Endothelial cell of umbilical vein (primary cell): ENCODE measurements at regions of chr1 and their contacts with region 1.

Region 1: GRCh38 chr1:23184212-23184934 is 15.7 kb upstream of the LUZP1 start:
- DNase-seq: peak; percentile 60
- H3K4me3 ChIP-seq: peak overlapping the region in 1 of 3 experiments; percentile 19
- H3K27ac ChIP-seq: no peak overlapping the region
- H3K4me1 ChIP-seq: peaks cover 10% of the 10 kb centered on the region
- H3K27me3 ChIP-seq: no peaks in the 10 kb centered on the region
- CTCF ChIP-seq: peak; percentile 43 to 48
- POLR2A ChIP-seq: no peak

Region 2: DNA sequence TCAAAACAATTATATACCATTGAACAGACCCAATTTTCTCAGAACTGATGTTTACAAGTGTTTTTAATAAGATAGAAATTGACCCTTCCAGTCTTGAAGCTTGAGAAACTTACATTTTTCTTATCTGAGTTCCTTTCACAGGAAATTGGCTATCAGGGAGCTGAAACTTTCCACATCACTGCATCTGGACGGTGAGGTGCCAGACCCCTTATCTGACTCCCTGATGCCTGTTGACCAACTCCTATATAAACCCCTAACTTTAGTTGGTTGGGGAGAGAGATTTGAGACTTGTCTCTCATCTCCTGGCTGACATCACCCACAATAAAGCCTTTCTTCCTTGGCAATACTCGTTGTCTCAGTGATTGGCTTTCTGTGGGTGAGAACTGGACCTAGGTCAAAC is 243.1 kb before region 1 on chr1:
- CTCF ChIA-PET with region 1: no interaction called
- POLR2A ChIA-PET with region 1: no interaction called
- dilution Hi-C with region 1: no loop called
- intact Hi-C with region 1: no loop called
- DNase-seq: no peak
- H3K4me3 ChIP-seq: no peak overlapping the region
- H3K27ac ChIP-seq: no peak overlapping the region
- H3K4me1 ChIP-seq: no peaks in the 10 kb centered on the region
- H3K27me3 ChIP-seq: peaks cover 11 to 25% of the 10 kb centered on the region in 2 experiments
- CTCF ChIP-seq: no peak
- POLR2A ChIP-seq: no peak

Region 3: DNA sequence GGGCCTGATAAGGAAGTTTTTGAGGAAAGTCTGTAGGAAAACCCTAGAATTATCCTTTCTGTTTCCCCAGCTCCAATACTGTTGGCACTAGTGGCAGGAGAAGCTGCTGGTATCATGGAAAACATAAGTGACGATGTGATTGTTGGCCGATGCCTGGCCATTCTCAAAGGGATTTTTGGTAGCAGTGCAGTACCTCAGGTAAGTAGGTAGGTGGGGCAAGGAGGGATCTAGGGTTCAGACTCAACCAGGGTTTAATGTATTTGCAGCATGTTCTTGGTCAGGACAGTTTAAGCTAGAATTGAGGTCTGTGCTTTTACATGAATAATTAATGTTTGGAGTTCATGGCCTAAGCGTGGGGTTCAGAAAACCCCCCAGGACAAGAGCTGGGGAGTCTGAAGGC is 103.0 kb before region 1 on chr1:
- CTCF ChIA-PET with region 1: interaction called, 671 read pairs
- POLR2A ChIA-PET with region 1: no interaction called
- dilution Hi-C with region 1: no loop called
- intact Hi-C with region 1: no loop called
- DNase-seq: no peak
- H3K4me3 ChIP-seq: no peak overlapping the region
- H3K27ac ChIP-seq: no peak overlapping the region
- H3K4me1 ChIP-seq: peaks cover 11% of the 10 kb centered on the region
- H3K27me3 ChIP-seq: no peaks in the 10 kb centered on the region
- CTCF ChIP-seq: peak in 1 of 2 donors; percentile 6
- POLR2A ChIP-seq: no peak

Region 4: GRCh38 chr1:23114424-23115079 is 69.8 kb before region 1 on chr1:
- CTCF ChIA-PET with region 1: interaction called, 36 read pairs
- POLR2A ChIA-PET with region 1: no interaction called
- dilution Hi-C with region 1: no loop called
- intact Hi-C with region 1: no loop called
- DNase-seq: peak; percentile 48
- H3K4me3 ChIP-seq: no peak overlapping the region
- H3K27ac ChIP-seq: peak overlapping the region; percentile 60
- H3K4me1 ChIP-seq: peaks cover 37% of the 10 kb centered on the region
- H3K27me3 ChIP-seq: no peaks in the 10 kb centered on the region
- CTCF ChIP-seq: no peak
- POLR2A ChIP-seq: no peak

Region 5: GRCh38 chr1:23129846-23130245 is 54.5 kb before region 1 on chr1:
- CTCF ChIA-PET with region 1: interaction called, 28 read pairs
- POLR2A ChIA-PET with region 1: no interaction called
- dilution Hi-C with region 1: no loop called
- intact Hi-C with region 1: no loop called
- DNase-seq: peak; percentile 78
- H3K4me3 ChIP-seq: no peak overlapping the region
- H3K27ac ChIP-seq: peak overlapping the region; percentile 76
- H3K4me1 ChIP-seq: peaks cover 67% of the 10 kb centered on the region
- H3K27me3 ChIP-seq: no peaks in the 10 kb centered on the region
- CTCF ChIP-seq: no peak
- POLR2A ChIP-seq: peak; percentile 40

Region 6: DNA sequence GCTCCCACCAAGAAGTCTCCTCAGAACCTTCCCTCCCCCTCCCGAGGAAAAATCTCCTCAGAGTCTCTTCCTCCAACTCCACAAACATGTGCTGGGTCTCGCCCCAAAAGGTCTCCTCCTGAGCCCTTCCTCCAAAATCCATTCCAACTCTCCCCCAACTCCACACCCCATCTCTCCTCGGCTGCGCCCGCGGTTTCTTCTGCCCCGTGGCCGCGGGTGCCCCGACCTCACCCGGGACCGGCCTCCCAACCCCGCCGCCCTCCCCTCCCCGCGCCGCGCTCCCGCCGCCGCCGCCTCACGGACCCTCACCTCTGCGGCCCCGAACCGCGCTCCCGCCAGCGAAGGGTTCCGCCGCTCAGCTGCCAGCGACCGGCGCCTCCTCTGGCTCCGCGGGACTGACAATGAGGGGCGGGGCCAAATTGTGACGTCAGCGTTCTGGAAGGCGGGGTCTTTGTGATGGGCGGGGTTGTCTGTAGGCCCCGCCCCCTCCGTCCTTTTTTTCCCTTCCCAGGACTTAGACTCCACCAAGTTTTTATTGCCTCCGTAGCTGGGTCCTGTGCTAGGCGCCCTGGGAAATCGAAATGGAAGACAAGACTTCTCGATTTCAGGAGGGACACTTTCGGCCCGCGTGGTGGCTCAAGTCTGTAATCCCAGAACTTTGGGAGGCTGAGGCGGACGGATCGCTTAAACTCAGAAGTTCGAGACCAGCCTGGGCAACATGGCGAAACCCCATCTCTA is 15.7 kb before region 1 on chr1 and contains the start of gene LUZP1:
- CTCF ChIA-PET with region 1: interaction called, 129 read pairs
- POLR2A ChIA-PET with region 1: interaction called, 12 read pairs
- dilution Hi-C with region 1: no loop called
- intact Hi-C with region 1: no loop called
- DNase-seq: peak; percentile 93
- H3K4me3 ChIP-seq: peak within 1 kb of the TSS; percentile 84 to 95 (median 93)
- H3K27ac ChIP-seq: peak within 1 kb of the TSS; percentile 77
- H3K4me1 ChIP-seq: peaks cover 32% of the 10 kb centered on the region
- H3K27me3 ChIP-seq: no peaks in the 10 kb centered on the region
- CTCF ChIP-seq: peak in 1 of 2 donors; percentile 7
- POLR2A ChIP-seq: peak; percentile 88
- total RNA-seq, gene LUZP1: 82.4 and 92.3 TPM in 2 replicates

Region 7: GRCh38 chr1:23216771-23217420 is 32.5 kb after region 1 on chr1:
- CTCF ChIA-PET with region 1: interaction called, 26 read pairs
- POLR2A ChIA-PET with region 1: no interaction called
- dilution Hi-C with region 1: no loop called
- intact Hi-C with region 1: no loop called
- DNase-seq: no peak
- H3K4me3 ChIP-seq: peak overlapping the region; percentile 49 to 60 (median 49)
- H3K27ac ChIP-seq: no peak overlapping the region
- H3K4me1 ChIP-seq: peaks cover 10% of the 10 kb centered on the region
- H3K27me3 ChIP-seq: peaks cover 0 to 7% of the 10 kb centered on the region in 2 experiments
- CTCF ChIP-seq: peak; percentile 68 to 73
- POLR2A ChIP-seq: no peak